MCF 10A (cell line): ENCODE measurements at regions of chr21 and their contacts with region 1.

Region 1: DNA sequence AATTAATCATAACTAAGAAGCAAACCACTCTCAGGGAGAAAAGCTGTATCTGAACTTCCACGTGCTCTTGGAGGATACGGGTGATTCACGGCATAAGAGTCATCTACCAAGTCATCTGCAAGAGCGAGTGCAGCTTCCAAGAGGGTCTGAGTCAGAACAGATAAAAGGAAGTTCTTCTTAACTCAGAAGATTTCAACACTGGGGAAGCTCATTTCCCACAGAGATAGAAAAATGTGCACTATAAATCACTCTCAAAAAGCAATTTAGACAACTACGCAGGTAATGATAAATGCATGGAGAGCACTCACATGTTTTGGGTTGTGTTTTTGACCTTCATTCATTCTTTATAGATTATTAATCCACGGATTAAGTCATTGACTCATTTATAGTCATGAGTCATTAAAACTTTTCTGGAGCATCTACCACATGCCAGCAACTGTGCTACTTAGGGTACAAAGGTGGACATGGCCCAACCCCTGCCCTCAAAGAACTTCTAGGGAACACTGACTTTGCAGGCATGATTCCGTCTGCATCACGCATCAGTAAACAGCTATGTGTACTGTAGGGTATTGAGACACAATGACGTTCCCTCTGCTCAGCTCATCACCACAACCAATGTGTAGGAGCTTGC is 20.8 kb downstream of the KCNJ15 start:
- DNase-seq: peak; percentile 97
- H3K4me3 Mint-ChIP-seq: peak overlapping the region; percentile 54
- H3K27ac Mint-ChIP-seq: peak overlapping the region; percentile 83
- H3K4me1 Mint-ChIP-seq: peaks cover 51% of the 10 kb centered on the region
- H3K27me3 Mint-ChIP-seq: no peaks in the 10 kb centered on the region
- CTCF ChIP-seq: no peak

Region 2: GRCh38 chr21:38236232-38236631 is 41.4 kb before region 1 on chr21:
- CTCF ChIA-PET with region 1: interaction called, 5 read pairs
- POLR2A ChIA-PET with region 1: interaction called, 22 read pairs
- intact Hi-C with region 1: loop called (anchors 5 kb)
- DNase-seq: peak; percentile 42
- H3K4me3 Mint-ChIP-seq: peak overlapping the region; percentile 30
- H3K27ac Mint-ChIP-seq: peak overlapping the region; percentile 22
- H3K4me1 Mint-ChIP-seq: peaks cover 39% of the 10 kb centered on the region
- H3K27me3 Mint-ChIP-seq: no peaks in the 10 kb centered on the region
- CTCF ChIP-seq: no peak

Region 3: GRCh38 chr21:38244885-38245545 is 32.6 kb before region 1 on chr21:
- CTCF ChIA-PET with region 1: interaction called, 3 read pairs
- POLR2A ChIA-PET with region 1: interaction called, 3 read pairs
- intact Hi-C with region 1: loop called (anchors 5 kb)
- DNase-seq: peak; percentile 84
- H3K4me3 Mint-ChIP-seq: no peak overlapping the region
- H3K27ac Mint-ChIP-seq: peak overlapping the region; percentile 63
- H3K4me1 Mint-ChIP-seq: peaks cover 39% of the 10 kb centered on the region
- H3K27me3 Mint-ChIP-seq: no peaks in the 10 kb centered on the region
- CTCF ChIP-seq: no peak

Region 4: GRCh38 chr21:38289705-38290485 is 12.3 kb after region 1 on chr21:
- CTCF ChIA-PET with region 1: interaction called, 3 read pairs
- POLR2A ChIA-PET with region 1: interaction called, 35 read pairs
- intact Hi-C with region 1: no loop called
- DNase-seq: peak; percentile 98
- H3K4me3 Mint-ChIP-seq: peak overlapping the region; percentile 41
- H3K27ac Mint-ChIP-seq: peak overlapping the region; percentile 77
- H3K4me1 Mint-ChIP-seq: peaks cover 38% of the 10 kb centered on the region
- H3K27me3 Mint-ChIP-seq: no peaks in the 10 kb centered on the region
- CTCF ChIP-seq: no peak

Region 5: GRCh38 chr21:38306433-38307141 is 29.0 kb after region 1 on chr21:
- CTCF ChIA-PET with region 1: interaction called, 4 read pairs
- POLR2A ChIA-PET with region 1: interaction called, 14 read pairs
- intact Hi-C with region 1: no loop called
- DNase-seq: peak; percentile 97
- H3K4me3 Mint-ChIP-seq: peak overlapping the region; percentile 16
- H3K27ac Mint-ChIP-seq: peak overlapping the region; percentile 11
- H3K4me1 Mint-ChIP-seq: peaks cover 29% of the 10 kb centered on the region
- H3K27me3 Mint-ChIP-seq: no peaks in the 10 kb centered on the region
- CTCF ChIP-seq: no peak